Activated CD8-positive, alpha-beta memory T cell treated with anti-CD3 and anti-CD28 coated beads, Interleukin-2, amount 10 ng/mL, durations not matched to agents 7 days and 5 days (primary cell): ENCODE measurements at regions of chr19 and their contacts with region 1.

Region 1: DNA sequence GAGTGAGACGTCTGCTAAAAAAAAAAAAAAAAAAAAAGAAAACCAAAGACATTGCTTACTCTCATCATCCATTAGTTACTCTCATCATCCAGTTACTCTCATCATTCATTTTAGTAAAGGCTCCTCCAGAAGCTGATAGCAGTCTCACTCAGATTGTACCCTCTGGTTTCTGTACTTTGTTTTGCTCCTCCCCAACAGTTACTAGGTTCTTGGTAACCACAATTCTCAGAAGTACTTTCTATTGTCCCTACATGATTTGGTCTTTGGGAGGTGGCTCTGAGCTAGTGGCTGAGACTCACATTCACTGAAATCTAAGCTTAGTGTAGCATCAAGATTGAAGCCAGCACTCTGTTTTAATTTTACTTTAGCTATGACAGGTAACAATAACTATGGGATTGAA is 14.3 kb downstream of the ERICH4 start:
- DNase-seq: peak; percentile 57
- ATAC-seq: peak; percentile 97
- H3K4me3 Mint-ChIP-seq: peak overlapping the region; percentile 55
- H3K27ac Mint-ChIP-seq: peak overlapping the region; percentile 89
- H3K4me1 Mint-ChIP-seq: peaks cover 43% of the 10 kb centered on the region
- H3K27me3 Mint-ChIP-seq: peaks cover 14% of the 10 kb centered on the region

Region 2: GRCh38 chr19:41439441-41440222 is 17.6 kb before region 1 on chr19 and contains the start of gene DMAC2:
- CTCF ChIA-PET with region 1: interaction called, 63 read pairs
- DNase-seq: peak; percentile 99
- ATAC-seq: peak; percentile 96
- H3K4me3 Mint-ChIP-seq: no peak within 1 kb of the TSS
- H3K27ac Mint-ChIP-seq: no peak within 1 kb of the TSS
- H3K4me1 Mint-ChIP-seq: peaks cover 19% of the 10 kb centered on the region
- H3K27me3 Mint-ChIP-seq: no peaks in the 10 kb centered on the region
- total RNA-seq, gene DMAC2: 43.2 to 56.5 TPM

Region 3: DNA sequence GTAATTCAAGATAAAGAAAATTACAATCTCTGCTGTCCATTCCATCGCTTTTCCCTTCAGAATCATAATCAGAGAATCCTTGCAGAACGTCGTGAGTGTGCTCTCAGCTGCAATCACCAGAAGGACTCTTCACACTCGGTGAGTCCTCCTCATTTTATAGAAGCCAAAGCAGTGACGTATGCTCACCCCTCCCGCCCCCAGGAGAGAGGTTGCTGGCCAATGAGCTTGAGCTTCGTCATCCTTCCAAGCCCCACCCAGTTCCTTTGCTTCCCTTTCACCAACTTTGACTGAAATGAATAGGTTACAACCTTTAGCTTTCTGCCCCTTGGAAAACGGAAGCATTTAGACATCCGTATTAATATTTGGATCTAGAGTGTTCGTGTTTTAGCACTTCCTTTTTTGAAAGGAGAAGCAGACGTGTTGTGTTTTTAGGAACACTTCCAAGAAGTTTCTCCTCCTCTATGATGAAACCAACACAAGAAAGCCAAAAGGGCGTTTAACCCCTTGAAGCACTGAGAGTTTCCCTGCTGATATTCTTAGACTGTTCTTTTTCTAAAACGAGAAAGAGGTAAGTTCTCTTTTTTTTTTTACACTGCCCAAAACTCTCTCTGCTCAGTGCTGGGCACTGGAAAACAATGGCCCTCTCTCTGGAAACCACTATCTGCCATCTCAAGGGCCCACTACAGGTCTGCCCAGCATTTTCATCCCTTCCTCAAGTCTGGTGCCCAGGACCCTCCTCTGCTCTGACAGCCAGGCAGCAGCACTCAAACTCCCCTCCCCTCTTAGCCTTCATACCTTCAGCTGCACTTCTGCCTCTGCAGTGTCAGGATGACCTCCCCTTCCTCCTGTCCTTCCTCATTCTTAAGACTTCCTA is 74.4 kb after region 1 on chr19:
- CTCF ChIA-PET with region 1: interaction called, 190 read pairs
- DNase-seq: peak; percentile 89
- ATAC-seq: peak; percentile 76
- H3K4me3 Mint-ChIP-seq: peak overlapping the region; percentile 71
- H3K27ac Mint-ChIP-seq: peak overlapping the region; percentile 75
- H3K4me1 Mint-ChIP-seq: peaks cover 74% of the 10 kb centered on the region
- H3K27me3 Mint-ChIP-seq: peaks cover 23% of the 10 kb centered on the region

Region 4: DNA sequence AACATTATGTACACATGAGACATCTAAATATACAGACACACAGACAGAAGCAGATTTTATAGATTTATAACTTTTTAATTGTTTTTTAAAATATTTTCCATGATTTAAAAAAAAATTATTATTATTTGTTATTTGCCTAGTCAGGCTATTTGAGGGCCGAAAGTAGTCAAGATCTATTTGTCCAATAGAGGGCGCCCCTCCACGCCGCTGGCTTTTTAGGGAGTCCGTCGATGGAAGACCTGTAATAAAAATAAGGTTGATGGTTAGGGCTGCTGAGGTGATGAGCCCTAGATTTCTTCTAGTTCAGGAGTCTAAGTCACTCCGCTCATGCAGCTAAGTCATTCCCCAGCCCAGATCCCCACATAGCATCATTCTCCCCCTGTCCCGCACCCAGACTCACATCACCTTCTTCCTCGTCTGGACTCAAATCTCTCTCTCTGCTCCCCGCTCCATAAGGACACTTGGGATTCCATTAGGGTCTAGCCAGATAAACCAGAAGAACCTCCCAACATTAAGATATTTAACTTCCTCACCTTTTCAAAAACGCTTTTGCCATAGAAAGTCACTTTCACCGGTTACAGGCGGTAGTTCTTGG is 84.8 kb after region 1 on chr19:
- CTCF ChIA-PET with region 1: interaction called, 190 read pairs
- DNase-seq: peak; percentile 89
- ATAC-seq: no peak
- H3K4me3 Mint-ChIP-seq: no peak overlapping the region
- H3K27ac Mint-ChIP-seq: peak overlapping the region; percentile 63
- H3K4me1 Mint-ChIP-seq: peaks cover 56% of the 10 kb centered on the region
- H3K27me3 Mint-ChIP-seq: no peaks in the 10 kb centered on the region

Region 5: DNA sequence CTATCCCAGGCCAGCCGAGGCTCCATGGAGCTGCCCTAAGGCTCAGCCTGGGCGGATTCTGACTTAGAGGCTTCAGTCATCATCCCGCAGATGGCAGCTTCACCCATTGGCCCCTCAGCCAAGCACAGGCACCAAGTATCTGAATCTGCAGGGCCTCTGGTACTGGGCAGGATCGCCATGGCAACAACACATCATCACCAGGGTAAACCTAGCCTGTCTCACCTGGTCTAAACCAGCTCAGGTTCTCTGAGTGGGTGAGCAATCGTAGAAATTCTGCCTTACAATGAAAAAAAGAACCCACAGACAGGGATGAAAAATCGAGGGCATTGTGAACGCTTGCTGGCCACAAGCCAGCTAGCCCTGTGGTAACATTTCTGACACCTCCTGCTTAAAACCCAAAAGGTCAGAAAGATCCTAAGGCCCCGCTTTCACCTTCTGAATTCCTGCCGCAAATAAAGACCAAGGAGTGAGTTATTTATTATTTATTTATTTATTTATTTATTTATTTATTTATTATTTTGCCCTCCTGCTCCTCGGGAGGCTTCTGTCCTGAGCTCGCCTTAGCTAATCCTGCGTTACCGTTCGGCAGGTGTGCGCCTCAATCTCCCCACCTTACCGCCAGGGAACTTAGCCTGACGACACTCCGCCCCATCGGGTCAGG is 106.7 kb after region 1 on chr19:
- CTCF ChIA-PET with region 1: interaction called, 132 read pairs
- DNase-seq: no peak
- ATAC-seq: peak; percentile 52
- H3K4me3 Mint-ChIP-seq: no peak overlapping the region
- H3K27ac Mint-ChIP-seq: no peak overlapping the region
- H3K4me1 Mint-ChIP-seq: peaks cover 52% of the 10 kb centered on the region
- H3K27me3 Mint-ChIP-seq: no peaks in the 10 kb centered on the region

Region 6: DNA sequence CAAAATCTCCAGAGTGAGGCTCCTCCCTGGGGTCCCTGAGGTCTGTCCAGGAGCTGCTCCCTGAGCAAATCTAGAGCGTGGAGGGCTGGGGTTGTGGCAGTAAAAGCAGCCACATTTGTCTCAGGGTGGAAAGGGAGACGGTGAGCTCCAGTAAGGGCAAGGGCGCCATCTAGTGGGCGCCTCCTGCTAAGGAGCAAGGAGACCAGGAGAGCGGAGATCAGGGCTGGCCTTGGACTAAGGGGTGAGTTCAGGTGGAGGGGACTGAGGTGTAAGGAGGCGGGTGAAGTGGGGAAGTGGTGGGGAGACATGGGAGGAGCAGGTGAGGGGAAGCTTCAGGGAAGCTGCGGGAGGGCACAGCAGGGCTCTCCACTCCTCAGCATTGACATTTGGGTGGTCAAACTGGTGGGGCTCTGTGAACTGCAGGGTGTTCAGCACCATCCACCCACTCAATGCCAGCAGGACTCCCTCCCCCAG is 113.4 kb after region 1 on chr19:
- CTCF ChIA-PET with region 1: interaction called, 132 read pairs
- DNase-seq: peak; percentile 89
- ATAC-seq: peak; percentile 96
- H3K4me3 Mint-ChIP-seq: no peak overlapping the region
- H3K27ac Mint-ChIP-seq: peak overlapping the region; percentile 63
- H3K4me1 Mint-ChIP-seq: peaks cover 22% of the 10 kb centered on the region
- H3K27me3 Mint-ChIP-seq: no peaks in the 10 kb centered on the region

Region 7: DNA sequence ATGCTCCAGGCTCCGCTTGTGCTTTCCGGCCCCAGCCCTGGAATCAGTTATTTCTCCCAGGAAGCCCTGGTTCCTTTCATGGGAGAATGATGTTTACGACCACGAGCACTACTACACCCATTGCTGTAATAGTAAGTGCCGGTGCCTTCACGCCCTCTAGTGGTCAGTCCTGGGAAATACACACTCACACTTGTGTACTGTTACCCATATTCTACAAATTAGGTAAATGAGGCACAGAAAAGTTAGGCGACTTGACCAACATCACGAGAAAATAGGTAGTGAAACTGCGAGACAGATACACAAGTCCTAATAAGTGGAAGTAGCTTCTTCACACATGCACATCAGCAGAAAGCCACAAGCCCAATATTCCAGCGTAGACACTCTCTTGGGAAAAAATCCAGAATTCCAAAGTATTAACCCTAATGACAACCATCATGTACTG is 140.4 kb after region 1 on chr19:
- CTCF ChIA-PET with region 1: interaction called, 13 read pairs
- DNase-seq: peak; percentile 87
- ATAC-seq: peak; percentile 75
- H3K4me3 Mint-ChIP-seq: no peak overlapping the region
- H3K27ac Mint-ChIP-seq: no peak overlapping the region
- H3K4me1 Mint-ChIP-seq: peaks cover 17% of the 10 kb centered on the region
- H3K27me3 Mint-ChIP-seq: peaks cover 48% of the 10 kb centered on the region